Activated T-helper 2 cell treated with anti-CD3 and anti-CD28 coated beads, Interferon-gamma antibody, Interleukin-2, Interleukin-4, amounts not matched to agents 10 μg/mL and 5 μg/mL and 100 μg/mL, durations not matched to agents 14 hours and 24 hours and 36 hours (primary cell): ENCODE measurements at regions of chr18 and their contacts with region 1.

Region 1: GRCh38 chr18:76859474-76860339 is 37.4 kb downstream of the ZNF236 start:
- DNase-seq: peak; percentile 30
- H3K4me3 Mint-ChIP-seq: peak overlapping the region; percentile 51
- H3K27ac Mint-ChIP-seq: peak overlapping the region; percentile 93
- H3K4me1 Mint-ChIP-seq: peaks cover 44% of the 10 kb centered on the region
- H3K27me3 Mint-ChIP-seq: no peaks in the 10 kb centered on the region

Region 2: DNA sequence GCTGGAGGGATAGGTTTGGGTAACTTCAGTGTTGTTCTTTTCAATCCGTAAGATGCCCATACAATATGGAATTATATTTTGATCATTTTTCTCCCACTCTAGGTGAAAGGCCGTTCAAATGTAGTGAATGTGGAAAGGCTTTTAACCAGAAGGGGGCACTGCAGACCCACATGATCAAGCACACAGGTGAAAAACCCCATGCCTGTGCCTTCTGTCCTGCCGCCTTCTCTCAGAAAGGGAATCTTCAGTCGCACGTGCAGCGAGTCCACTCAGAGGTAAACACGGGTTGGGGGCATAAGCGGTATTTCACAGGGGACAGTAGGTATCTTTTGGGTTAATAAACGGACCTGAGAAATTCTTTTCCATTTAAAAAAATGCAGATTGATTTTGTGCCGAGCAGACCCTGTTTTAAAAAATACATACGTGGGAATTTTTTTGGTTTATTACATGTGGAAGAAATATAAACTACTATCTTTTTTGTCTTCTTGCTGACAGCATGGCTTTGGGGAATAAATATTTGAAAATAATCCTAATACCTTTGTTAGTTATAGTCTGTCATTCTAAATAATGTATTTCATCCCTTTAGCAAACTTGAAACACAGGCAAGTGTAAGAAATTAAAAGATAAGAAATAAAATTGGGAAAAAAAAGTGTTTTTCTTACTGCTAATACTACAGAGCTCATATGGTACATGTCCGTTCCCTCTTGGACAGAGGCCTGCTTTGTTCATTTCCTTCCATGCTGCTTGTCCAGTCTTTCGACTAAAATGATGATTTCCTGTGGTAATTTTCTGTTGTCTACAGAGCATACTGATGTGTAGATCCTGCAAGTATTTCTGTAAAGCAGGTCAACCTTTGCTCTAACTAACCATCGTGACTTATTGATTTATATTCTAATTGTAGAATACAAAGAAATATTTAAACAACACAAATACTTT is 16.0 kb after region 1 on chr18:
- intact Hi-C with region 1: loop called (anchors 1 kb)
- DNase-seq: peak; percentile 22
- H3K4me3 Mint-ChIP-seq: no peak overlapping the region
- H3K27ac Mint-ChIP-seq: peak overlapping the region; percentile 85
- H3K4me1 Mint-ChIP-seq: peaks cover 14% of the 10 kb centered on the region
- H3K27me3 Mint-ChIP-seq: no peaks in the 10 kb centered on the region

Region 3: DNA sequence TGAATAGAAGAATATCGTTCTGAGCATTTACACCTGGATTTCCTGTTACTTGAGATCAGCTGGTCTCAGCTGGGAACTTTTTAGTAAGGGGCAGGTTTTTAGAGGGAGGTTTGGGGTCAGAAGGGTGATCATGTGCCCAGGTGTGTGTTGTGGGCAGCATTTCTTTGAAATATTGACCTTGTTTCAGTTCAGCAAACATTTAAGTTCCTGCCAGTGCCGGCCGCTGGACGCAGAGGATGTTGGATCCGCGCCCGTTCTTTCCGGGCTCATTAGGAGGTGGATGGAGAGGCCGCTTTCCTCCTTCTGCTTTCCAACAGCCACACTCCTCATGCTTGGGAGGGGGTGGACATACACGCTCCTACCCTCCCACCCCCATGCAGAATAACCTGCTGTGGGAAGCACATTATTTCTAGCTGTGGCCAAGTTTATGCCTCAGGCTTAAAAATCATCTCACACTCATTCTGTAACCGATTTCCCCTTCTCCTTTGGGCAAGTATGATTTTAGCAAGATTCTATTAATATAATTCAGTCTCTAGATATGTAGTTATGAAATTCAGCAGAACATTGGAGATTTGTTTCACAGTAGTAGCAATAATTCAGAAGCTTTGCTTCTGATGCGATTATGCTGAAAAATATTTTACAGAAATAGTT is 94.0 kb after region 1 on chr18:
- intact Hi-C with region 1: no loop called
- DNase-seq: no peak
- H3K4me3 Mint-ChIP-seq: no peak overlapping the region
- H3K27ac Mint-ChIP-seq: no peak overlapping the region
- H3K4me1 Mint-ChIP-seq: peaks cover 24% of the 10 kb centered on the region
- H3K27me3 Mint-ChIP-seq: no peaks in the 10 kb centered on the region